AG04450 (cell line): ENCODE measurements at regions of chr20 and their contacts with region 1.

Region 1: DNA sequence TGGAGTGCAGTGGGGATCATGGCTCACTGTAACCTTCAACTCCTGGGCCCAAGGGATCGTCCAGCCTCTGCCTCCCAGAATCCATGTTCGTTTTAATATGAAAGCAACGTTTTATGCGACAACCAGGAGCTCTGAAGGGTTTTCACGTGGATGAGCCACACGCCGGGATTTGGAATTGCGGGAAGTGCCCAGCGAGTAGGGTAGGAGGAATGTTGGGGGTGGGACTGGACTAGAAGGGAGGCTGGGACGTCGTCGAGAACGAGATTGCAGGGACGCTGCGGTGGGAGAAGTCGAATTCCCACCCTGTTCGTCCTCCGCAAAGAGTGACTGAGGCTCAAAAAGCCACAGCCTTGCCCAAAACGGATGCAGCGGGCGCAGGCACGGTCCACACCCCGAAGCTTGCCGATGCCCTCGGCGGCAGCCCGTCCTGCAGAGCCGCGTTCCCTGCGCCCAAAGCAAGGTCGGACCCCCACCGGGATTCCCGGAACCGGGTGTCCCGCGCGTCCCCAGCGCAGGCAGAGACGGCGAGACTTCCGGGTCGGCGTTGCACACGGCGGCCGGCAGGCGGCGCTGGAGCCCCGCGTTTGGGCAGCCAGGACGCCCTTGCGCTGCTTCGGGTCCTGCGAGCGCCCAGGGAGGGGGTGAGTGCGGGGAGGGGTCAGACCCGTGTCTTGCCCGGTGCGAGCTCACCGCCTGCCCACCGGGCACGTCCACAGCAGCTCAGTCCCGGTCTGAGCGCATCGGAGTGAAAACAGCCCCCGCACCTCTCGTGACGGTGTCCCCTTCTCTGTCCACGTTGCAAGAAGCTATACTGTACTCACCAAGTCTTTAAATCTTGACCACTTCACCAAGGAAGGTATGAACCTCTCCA is 87.8 kb downstream of the DHX35 start:
- DNase-seq: peak; percentile 20
- H3K4me3 ChIP-seq: peak overlapping the region; percentile 93
- H3K27ac ChIP-seq: peak overlapping the region; percentile 31
- H3K27me3 ChIP-seq: no peaks in the 10 kb centered on the region
- CTCF ChIP-seq: peak; percentile 93

Region 2: DNA sequence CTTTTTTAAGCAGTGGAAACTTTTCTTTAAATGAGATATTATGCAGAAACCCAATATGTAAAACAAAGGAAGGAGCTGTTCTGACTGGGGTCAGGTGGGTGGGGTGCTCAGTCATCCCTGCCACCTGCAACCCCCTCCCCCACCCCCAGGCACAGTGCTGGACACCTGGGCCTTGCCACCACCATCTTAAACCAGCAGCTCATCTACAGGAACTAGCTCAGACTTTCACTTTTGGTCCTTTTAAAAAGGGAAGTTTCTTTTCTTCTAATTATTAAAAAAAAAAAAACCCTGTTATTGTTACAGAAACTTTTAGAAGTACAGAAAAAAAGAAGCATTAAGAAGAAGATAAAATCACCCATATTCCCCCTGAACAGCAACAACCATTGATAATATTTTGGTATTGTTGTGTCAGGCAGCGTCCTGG is 207.3 kb before region 1 on chr20:
- CTCF ChIA-PET with region 1: no interaction called
- POLR2A ChIA-PET with region 1: no interaction called
- DNase-seq: no peak
- H3K4me3 ChIP-seq: no peak overlapping the region
- H3K27ac ChIP-seq: no peak overlapping the region
- H3K27me3 ChIP-seq: peaks cover 2% of the 10 kb centered on the region
- CTCF ChIP-seq: no peak

Region 3: GRCh38 chr20:38903335-38903734 is 146.6 kb before region 1 on chr20:
- CTCF ChIA-PET with region 1: interaction called, 14 read pairs
- POLR2A ChIA-PET with region 1: no interaction called
- DNase-seq: no peak
- H3K4me3 ChIP-seq: no peak overlapping the region
- H3K27ac ChIP-seq: no peak overlapping the region
- H3K27me3 ChIP-seq: peaks cover 8% of the 10 kb centered on the region
- CTCF ChIP-seq: no peak

Region 4: DNA sequence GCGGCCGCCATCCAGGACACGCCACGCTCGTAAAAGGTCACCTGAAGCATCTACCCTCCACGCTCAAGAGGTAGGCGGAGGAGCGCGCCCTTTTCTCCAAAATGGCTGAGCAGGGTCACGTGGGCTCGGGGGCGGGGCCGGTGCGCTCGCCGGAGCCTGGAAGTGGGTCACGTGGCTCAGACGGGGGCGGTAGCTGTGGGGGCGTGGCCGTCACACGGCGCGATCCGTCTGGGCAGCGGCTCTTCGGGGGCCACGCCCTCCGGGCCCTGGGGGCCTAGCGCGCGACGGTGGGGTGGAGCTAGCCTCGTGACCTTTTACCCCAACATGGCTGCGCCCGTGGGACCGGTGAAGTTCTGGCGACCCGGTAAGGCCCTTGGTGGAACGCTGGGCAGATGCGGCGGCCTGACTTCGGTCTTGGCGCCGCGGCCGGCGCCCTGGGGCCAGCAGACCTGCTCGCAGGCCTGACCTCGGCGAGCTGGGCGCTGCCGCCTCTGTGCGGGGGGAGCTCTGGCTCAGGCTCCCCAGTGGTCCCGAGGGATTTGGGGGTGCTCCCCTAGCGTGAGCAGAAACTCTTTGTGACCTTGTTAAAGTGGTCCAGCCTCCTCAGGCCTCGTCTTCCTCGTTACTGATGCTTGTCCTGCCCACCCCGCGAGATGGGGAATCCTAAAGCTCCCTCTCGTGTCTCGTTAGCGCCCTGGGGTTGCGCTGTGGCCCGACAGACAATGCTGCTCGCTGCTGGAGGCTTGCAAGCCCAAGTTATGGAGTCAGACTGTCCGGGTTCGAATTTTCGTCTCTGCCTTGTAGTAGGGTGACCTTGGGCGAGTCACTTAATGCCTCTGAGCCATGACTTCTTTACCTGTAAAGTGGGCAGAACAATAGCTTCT is 87.6 kb before region 1 on chr20 and contains the start of gene DHX35:
- CTCF ChIA-PET with region 1: interaction called, 62 read pairs
- POLR2A ChIA-PET with region 1: interaction called, 7 read pairs
- DNase-seq: peak; percentile 83
- H3K4me3 ChIP-seq: peak within 1 kb of the TSS; percentile 93
- H3K27ac ChIP-seq: peak within 1 kb of the TSS; percentile 82
- H3K27me3 ChIP-seq: no peaks in the 10 kb centered on the region
- CTCF ChIP-seq: peak; percentile 51
- polyA plus RNA-seq, gene DHX35: 13.5 and 14.4 TPM in 2 replicates

Region 5: GRCh38 chr20:38987777-38988176 is 62.1 kb before region 1 on chr20:
- CTCF ChIA-PET with region 1: interaction called, 15 read pairs
- POLR2A ChIA-PET with region 1: interaction called, 9 read pairs
- DNase-seq: no peak
- H3K4me3 ChIP-seq: no peak overlapping the region
- H3K27ac ChIP-seq: no peak overlapping the region
- H3K27me3 ChIP-seq: no peaks in the 10 kb centered on the region
- CTCF ChIP-seq: no peak

Region 6: GRCh38 chr20:39036011-39036410 is 13.9 kb before region 1 on chr20:
- CTCF ChIA-PET with region 1: interaction called, 104 read pairs
- POLR2A ChIA-PET with region 1: no interaction called
- DNase-seq: peak; percentile 21
- H3K4me3 ChIP-seq: no peak overlapping the region
- H3K27ac ChIP-seq: peak overlapping the region; percentile 66
- H3K27me3 ChIP-seq: no peaks in the 10 kb centered on the region
- CTCF ChIP-seq: no peak

Region 7: DNA sequence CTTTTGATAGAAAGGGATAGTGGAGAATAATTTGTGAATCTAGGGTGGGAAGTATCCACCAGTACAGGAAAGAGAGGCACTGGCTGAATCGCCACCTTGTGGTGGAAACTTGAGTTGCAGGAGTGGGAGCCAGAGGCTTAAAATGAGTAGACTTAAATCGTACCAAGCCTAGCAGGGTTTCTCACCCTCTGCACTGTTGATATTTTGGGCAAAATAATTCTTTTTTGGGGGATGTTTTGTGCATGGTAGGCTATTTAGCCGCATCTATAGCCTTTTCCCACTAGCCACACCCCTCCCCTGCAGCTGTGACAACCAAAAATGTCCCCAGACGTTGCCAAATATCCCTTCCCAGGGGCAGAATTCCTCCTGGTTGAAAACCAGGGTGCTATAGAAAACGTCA is 31.3 kb after region 1 on chr20:
- CTCF ChIA-PET with region 1: interaction called, 315 read pairs
- POLR2A ChIA-PET with region 1: no interaction called
- DNase-seq: peak; percentile 62
- H3K4me3 ChIP-seq: no peak overlapping the region
- H3K27ac ChIP-seq: no peak overlapping the region
- H3K27me3 ChIP-seq: peaks cover 11% of the 10 kb centered on the region
- CTCF ChIP-seq: peak; percentile 97